ENCODE measurements at regions of chr9 and their contacts with region 1.

Region 1: GRCh38 chr9:130834371-130835311 is at the start of gene ABL1:
- DNase-seq: peak; percentile 87
- ATAC-seq: peak; percentile 91
- H3K4me3 Mint-ChIP-seq: peak within 1 kb of the TSS; percentile 98
- H3K27ac Mint-ChIP-seq: peak within 1 kb of the TSS; percentile 97
- H3K4me1 Mint-ChIP-seq: peaks cover 33% of the 10 kb centered on the region
- H3K27me3 Mint-ChIP-seq: no peaks in the 10 kb centered on the region
- total RNA-seq, gene ABL1: 31.8 to 32.3 TPM

Region 2: DNA sequence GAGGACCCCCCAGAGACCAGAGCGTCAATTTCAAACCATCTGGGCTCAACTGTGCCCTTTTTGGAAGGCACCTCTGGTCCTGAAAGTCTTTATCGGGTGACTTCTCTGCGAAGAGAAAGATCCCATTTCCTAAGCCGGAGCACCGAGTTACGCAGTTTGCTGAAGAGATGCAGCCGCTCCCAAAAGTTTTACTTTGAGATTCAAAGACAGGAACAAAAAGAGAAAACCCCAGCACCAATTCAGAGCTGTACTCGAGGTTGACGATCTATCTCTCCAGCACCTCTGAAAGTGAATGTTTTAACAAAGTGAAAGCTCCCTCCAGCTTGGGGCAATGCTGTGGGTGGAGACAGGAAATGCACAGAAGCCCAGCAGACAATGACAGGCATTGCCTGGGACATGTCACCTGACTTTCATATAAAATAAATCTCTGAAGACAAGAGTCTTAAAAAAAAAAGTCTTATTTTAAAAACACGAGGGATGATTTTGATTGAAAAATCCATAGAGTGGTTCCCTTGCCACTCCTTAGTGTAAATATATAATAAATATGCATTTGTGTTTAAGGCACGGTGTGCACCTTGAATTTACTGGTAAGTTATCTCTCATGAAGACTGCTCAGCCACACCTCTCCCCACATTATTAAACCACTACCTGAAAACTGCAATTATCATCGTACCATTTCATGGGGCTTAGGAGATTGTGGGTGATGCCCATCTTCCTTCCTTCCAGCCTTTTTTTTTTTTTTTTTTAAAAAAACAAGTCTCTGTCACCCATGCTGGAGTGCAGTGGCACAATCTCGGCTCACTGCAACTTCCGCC is 871.5 kb before region 1 on chr9:
- CTCF ChIA-PET with region 1: no interaction called
- POLR2A ChIA-PET with region 1: no interaction called
- intact Hi-C with region 1: loop called in 1 of 2 experiments (anchors 10 kb)
- DNase-seq: peak; percentile 86
- ATAC-seq: peak; percentile 94
- H3K4me3 Mint-ChIP-seq: peak overlapping the region; percentile 76
- H3K27ac Mint-ChIP-seq: peak overlapping the region; percentile 96
- H3K4me1 Mint-ChIP-seq: peaks cover 87% of the 10 kb centered on the region
- H3K27me3 Mint-ChIP-seq: no peaks in the 10 kb centered on the region

Region 3: DNA sequence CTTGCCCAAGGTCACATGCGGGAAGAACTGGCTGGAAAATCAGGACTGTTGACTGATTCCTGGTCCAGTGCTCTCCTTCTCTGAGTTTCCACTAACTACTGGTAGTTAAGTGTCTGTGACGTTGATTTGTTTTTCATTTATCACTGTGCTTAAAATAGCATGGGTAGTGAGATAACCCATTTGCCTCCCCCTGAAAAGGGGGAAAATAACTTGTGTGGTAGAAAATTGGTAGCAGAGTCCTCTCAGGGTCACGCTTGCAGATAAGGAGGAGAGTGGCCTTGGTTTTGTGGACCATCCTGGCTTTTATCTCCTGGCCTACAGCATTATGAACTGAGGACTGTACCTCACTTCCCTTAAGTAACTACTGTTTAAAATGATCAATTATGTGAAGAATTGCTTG is 244.3 kb before region 1 on chr9:
- CTCF ChIA-PET with region 1: no interaction called
- POLR2A ChIA-PET with region 1: no interaction called
- intact Hi-C with region 1: no loop called
- DNase-seq: no peak
- ATAC-seq: no peak
- H3K4me3 Mint-ChIP-seq: no peak overlapping the region
- H3K27ac Mint-ChIP-seq: no peak overlapping the region
- H3K4me1 Mint-ChIP-seq: peaks cover 19% of the 10 kb centered on the region
- H3K27me3 Mint-ChIP-seq: no peaks in the 10 kb centered on the region

Region 4: DNA sequence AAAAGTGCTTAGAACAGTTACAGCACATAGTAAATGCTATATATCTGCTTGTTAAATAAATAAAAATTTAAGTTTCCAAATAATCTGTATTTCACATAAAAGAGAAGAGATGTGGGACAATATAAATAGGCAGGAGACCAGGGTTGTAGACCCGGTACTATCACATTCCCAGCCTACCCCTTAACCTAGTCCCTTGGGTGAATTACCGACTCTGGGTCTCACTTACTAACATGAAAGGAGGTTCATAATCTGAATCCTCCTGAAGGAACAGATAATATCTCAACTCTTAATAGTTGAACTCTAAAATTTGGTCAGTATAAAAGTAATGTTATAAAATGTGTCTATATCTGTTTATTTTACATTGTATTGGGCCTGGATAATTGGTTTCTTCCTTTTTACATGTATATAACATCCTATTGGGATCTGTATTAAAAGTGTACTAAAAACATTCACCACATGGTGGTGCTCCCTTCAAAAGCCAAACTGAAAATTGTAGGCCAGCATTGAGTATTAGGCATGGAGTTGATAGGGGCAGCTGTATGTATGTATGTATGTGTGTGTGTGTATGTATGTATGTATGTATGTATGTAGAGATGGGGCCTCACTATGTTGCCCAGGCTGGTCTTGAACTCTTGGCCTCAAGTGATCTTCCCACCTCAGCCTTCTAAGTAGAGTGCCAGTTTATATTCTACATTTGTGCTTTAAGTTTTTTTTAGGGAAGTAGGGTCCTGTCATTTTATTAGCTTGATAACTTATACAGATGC is 63.8 kb before region 1 on chr9:
- CTCF ChIA-PET with region 1: interaction called, 3 read pairs
- POLR2A ChIA-PET with region 1: no interaction called
- intact Hi-C with region 1: loop called in 1 of 2 experiments (anchors 2 kb)
- DNase-seq: no peak
- ATAC-seq: peak; percentile 73
- H3K4me3 Mint-ChIP-seq: no peak overlapping the region
- H3K27ac Mint-ChIP-seq: no peak overlapping the region
- H3K4me1 Mint-ChIP-seq: peaks cover 23% of the 10 kb centered on the region
- H3K27me3 Mint-ChIP-seq: no peaks in the 10 kb centered on the region

Region 5: GRCh38 chr9:130815242-130815808 is 19.3 kb before region 1 on chr9:
- CTCF ChIA-PET with region 1: no interaction called
- POLR2A ChIA-PET with region 1: interaction called, 4 read pairs
- intact Hi-C with region 1: loop called in 1 of 2 experiments (anchors 1 kb)
- DNase-seq: no peak
- ATAC-seq: no peak
- H3K4me3 Mint-ChIP-seq: no peak overlapping the region
- H3K27ac Mint-ChIP-seq: no peak overlapping the region
- H3K4me1 Mint-ChIP-seq: peaks cover 12% of the 10 kb centered on the region
- H3K27me3 Mint-ChIP-seq: no peaks in the 10 kb centered on the region

Measured in activated CD4-positive, alpha-beta T cell treated with anti-CD3 and anti-CD28 coated beads for 36 hours (primary cell).